Sigmoid colon (tissue), 7 donors: ENCODE measurements at regions of chr12 and their contacts with region 1.

Region 1: GRCh38 chr12:100142851-100143559 is at the start of gene BLTP3B:
- DNase-seq: peak; percentile 93
- H3K4me3 ChIP-seq: peak within 1 kb of the TSS; percentile 76 to 99 (median 94)
- H3K27ac ChIP-seq: peak within 1 kb of the TSS; percentile 94 to 100 (median 100)
- H3K4me1 ChIP-seq: peaks cover 0 to 26% (median 24%) of the 10 kb centered on the region in 4 donors
- H3K27me3 ChIP-seq: no peaks in the 10 kb centered on the region
- CTCF ChIP-seq: no peak
- EP300 ChIP-seq: no peak
- POLR2A ChIP-seq: no peak
- total RNA-seq, gene BLTP3B: 33.3 to 41.7 (median 36.4) TPM

Region 2: DNA sequence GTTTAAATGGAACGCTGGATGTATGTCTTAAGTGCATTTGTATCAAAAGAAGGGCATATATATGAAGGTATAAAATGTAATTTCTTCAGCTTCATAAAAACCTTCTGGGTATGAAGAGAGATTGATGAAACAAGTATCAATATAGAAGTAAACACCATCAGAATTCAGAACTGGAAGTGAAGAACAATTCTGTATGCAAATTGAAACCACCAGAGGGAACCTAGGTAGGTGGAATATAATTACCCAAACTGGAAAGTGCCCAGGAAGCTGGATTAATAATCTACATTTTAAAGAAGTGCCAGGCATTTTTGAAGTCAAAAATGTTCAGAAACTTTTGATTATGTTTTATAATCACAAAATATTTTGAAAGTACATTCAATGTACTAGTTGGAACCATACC is 831.6 kb before region 1 on chr12:
- intact Hi-C with region 1: no loop called
- DNase-seq: no peak
- H3K4me3 ChIP-seq: no peak overlapping the region
- H3K27ac ChIP-seq: no peak overlapping the region
- H3K4me1 ChIP-seq: no peaks in the 10 kb centered on the region
- H3K27me3 ChIP-seq: no peaks in the 10 kb centered on the region
- CTCF ChIP-seq: no peak
- EP300 ChIP-seq: no peak
- POLR2A ChIP-seq: no peak

Region 3: DNA sequence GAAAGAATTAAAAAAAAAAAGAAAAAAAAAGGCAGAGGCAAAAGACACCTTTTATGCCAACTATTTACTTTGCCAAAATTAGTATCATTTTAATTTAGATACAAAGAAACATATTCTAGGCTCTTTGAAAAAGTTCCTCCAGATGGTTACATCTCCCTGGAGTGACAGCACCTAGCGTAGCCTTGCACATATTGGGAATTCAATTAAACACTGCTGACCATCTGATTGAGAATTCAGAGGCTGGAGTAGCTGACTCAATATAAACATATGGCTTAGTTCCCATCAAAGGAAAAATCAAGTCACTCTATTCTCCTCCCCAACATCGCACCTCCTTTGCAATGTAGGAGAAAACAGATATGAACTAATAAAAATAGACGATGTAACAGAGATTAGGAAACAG is 194.6 kb before region 1 on chr12:
- intact Hi-C with region 1: no loop called
- DNase-seq: no peak
- H3K4me3 ChIP-seq: no peak overlapping the region
- H3K27ac ChIP-seq: no peak overlapping the region
- H3K4me1 ChIP-seq: no peaks in the 10 kb centered on the region
- H3K27me3 ChIP-seq: no peaks in the 10 kb centered on the region
- CTCF ChIP-seq: no peak
- EP300 ChIP-seq: no peak
- POLR2A ChIP-seq: no peak

Region 4: DNA sequence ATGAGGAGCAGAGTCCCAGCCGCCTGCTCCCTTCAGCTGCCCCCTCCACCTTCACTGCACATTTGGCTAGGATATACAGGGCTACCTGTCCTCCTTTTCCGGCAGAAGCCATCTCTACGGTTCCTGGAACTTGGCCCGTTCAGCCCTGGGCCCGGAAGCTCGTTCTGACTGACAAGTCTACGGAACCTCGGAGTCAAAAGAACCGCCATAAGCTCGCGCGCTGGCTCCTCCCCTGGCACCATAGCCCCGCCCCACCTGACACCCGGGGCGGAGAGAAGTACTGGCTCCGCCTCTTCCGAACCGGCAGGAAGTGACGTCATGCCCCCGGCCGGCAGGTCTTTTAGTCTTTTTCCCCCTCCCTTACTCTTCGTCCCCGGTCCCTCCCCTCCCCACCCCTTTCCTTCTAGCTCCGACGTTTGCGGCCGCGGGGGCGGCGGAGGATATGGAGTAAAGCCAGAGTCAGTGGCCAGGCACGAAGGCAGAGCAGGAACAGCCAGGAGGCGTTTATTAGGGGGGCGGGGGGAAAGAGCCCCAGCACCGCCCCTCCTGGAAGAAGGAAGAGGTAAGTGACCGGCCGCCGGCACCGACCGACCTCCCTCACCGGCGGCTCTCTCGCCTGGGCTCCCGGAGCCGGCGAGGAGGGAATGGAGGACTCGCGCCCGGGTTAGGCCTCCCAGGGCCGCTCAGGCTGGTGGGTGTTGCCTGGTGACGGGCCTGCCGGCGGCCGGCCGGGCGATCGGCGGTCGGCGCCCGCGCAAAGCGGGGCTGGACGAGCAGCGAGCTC is 124.0 kb after region 1 on chr12 and contains the starts of genes DEPDC4 and SCYL2:
- intact Hi-C with region 1: loop called (anchors 2 kb)
- DNase-seq: peak; percentile 99
- H3K4me3 ChIP-seq: peak within 1 kb of the TSS; percentile 80 to 99 (median 92)
- H3K27ac ChIP-seq: peak within 1 kb of the TSS; percentile 94 to 99 (median 98)
- H3K4me1 ChIP-seq: peaks cover 0 to 42% (median 29%) of the 10 kb centered on the region in 4 donors
- H3K27me3 ChIP-seq: no peaks in the 10 kb centered on the region
- CTCF ChIP-seq: no peak
- EP300 ChIP-seq: no peak
- POLR2A ChIP-seq: peak; percentile 58 to 79
- total RNA-seq, gene DEPDC4: 0.82 TPM in 1 of 4 donors, not detected in the others
- total RNA-seq, gene SCYL2: 52.4 to 97.3 (median 67.0) TPM

Region 5: GRCh38 chr12:100573292-100574186 is 430.5 kb after region 1 on chr12 and contains the start of gene GAS2L3:
- intact Hi-C with region 1: loop called (anchors 5 kb)
- DNase-seq: peak; percentile 92
- H3K4me3 ChIP-seq: peak within 1 kb of the TSS; percentile 41 to 76 (median 64)
- H3K27ac ChIP-seq: peak within 1 kb of the TSS; percentile 50 to 80 (median 72)
- H3K4me1 ChIP-seq: peaks cover 0 to 20% (median 15%) of the 10 kb centered on the region in 4 donors
- H3K27me3 ChIP-seq: no peaks in the 10 kb centered on the region
- CTCF ChIP-seq: no peak
- EP300 ChIP-seq: no peak
- POLR2A ChIP-seq: peak; percentile 32 to 53
- total RNA-seq, gene GAS2L3: 1.6 to 6.1 (median 3.6) TPM